Activated CD4-positive, alpha-beta T cell treated with anti-CD3 and anti-CD28 coated beads for 36 hours (primary cell): ENCODE measurements at regions of chr5 and their contacts with region 1.

Region 1: DNA sequence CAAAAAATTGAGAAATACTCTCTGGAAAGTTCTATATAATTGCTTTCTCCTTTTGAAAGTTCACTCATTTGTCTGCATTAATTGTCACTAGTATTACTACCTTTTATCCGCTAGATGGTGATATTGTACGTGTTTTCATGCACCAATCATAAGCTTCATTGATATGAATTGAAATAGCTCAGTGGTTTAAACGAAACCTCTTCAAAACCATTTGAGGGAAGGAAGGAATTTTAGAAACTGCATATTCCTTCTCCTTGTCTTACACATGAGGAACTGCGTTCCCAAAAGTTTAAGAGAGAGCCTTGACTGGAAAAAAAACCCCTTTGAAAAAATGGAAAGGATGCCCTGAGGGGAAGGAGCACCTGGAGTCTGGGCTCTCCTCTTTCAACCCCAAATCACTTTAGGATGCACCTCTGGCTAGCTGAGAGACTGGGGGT is 98.6 kb downstream of the YTHDC2 start:
- DNase-seq: no peak
- ATAC-seq: no peak
- H3K4me3 Mint-ChIP-seq: no peak overlapping the region
- H3K27ac Mint-ChIP-seq: no peak overlapping the region
- H3K4me1 Mint-ChIP-seq: peaks cover 3% of the 10 kb centered on the region
- H3K27me3 Mint-ChIP-seq: peaks cover 2% of the 10 kb centered on the region

Region 2: DNA sequence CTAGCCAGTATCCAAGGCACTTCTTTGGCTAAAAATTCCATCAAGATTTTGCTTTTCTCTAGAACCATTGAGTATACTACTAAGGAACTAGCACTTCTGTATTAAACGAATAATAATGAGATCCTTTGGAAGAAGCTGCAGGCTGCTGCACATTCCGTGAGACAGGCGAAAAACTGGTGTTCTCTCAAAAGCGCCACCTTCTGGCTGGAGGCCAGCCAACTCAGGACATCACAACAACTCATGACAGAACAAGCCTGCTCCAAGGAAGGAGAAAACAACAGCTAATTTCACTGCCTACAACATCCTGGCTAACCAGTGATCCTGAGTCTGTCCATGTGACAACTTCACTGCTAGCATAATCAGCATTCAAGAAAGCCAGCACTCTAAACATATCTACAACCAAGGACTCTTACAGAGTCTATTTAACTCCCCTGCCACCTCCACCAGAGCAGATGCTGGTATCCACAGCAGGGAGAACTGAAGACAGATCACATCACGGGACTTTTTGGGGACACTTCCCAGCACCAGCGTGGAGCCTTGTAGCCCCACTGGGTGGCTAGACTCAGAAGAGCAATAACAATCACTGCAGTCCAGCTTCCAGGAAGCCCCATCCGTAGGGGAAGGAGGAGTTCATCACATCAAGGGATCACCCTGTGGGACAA is 51.9 kb after region 1 on chr5:
- CTCF ChIA-PET with region 1: interaction called, 31 read pairs
- POLR2A ChIA-PET with region 1: no interaction called
- intact Hi-C with region 1: loop called (anchors 1 kb)
- DNase-seq: peak; percentile 60
- ATAC-seq: no peak
- H3K4me3 Mint-ChIP-seq: no peak overlapping the region
- H3K27ac Mint-ChIP-seq: no peak overlapping the region
- H3K4me1 Mint-ChIP-seq: no peaks in the 10 kb centered on the region
- H3K27me3 Mint-ChIP-seq: peaks cover 22% of the 10 kb centered on the region

Region 3: DNA sequence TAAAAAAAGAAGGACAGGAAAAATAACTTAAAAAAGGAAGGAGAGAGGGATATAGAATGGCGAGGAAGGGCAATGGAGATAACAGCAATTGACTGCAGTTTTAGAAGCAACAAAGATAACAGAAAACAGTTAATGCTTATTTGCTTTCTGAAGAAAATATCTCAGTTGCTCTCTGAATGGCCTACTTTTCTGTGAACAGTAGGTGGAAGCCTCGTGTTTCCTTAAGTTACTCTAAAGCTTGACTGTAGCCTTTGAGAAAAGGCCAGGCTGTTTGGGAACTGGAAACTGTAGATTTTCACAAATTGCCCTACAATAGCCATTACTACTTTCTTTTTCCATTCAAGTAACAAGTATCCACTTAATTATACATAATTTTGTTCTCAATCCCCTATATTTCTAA is 305.9 kb after region 1 on chr5:
- CTCF ChIA-PET with region 1: no interaction called
- POLR2A ChIA-PET with region 1: no interaction called
- intact Hi-C with region 1: no loop called
- DNase-seq: no peak
- ATAC-seq: no peak
- H3K4me3 Mint-ChIP-seq: no peak overlapping the region
- H3K27ac Mint-ChIP-seq: no peak overlapping the region
- H3K4me1 Mint-ChIP-seq: no peaks in the 10 kb centered on the region
- H3K27me3 Mint-ChIP-seq: no peaks in the 10 kb centered on the region

Region 4: GRCh38 chr5:114449860-114450421 is 837.9 kb after region 1 on chr5:
- CTCF ChIA-PET with region 1: interaction called, 25 read pairs
- POLR2A ChIA-PET with region 1: no interaction called
- intact Hi-C with region 1: loop called (anchors 1 to 2 kb)
- DNase-seq: peak; percentile 76
- ATAC-seq: peak; percentile 92
- H3K4me3 Mint-ChIP-seq: no peak overlapping the region
- H3K27ac Mint-ChIP-seq: no peak overlapping the region
- H3K4me1 Mint-ChIP-seq: peaks cover 2% of the 10 kb centered on the region
- H3K27me3 Mint-ChIP-seq: peaks cover 7% of the 10 kb centered on the region

Region 5: GRCh38 chr5:114789773-114790402 is 1177.8 kb after region 1 on chr5:
- CTCF ChIA-PET with region 1: no interaction called
- POLR2A ChIA-PET with region 1: no interaction called
- intact Hi-C with region 1: loop called in 1 of 2 experiments (anchors 5 kb)
- DNase-seq: no peak
- ATAC-seq: peak; percentile 23
- H3K4me3 Mint-ChIP-seq: no peak overlapping the region
- H3K27ac Mint-ChIP-seq: no peak overlapping the region
- H3K4me1 Mint-ChIP-seq: peaks cover 3% of the 10 kb centered on the region
- H3K27me3 Mint-ChIP-seq: peaks cover 2% of the 10 kb centered on the region

Region 6: DNA sequence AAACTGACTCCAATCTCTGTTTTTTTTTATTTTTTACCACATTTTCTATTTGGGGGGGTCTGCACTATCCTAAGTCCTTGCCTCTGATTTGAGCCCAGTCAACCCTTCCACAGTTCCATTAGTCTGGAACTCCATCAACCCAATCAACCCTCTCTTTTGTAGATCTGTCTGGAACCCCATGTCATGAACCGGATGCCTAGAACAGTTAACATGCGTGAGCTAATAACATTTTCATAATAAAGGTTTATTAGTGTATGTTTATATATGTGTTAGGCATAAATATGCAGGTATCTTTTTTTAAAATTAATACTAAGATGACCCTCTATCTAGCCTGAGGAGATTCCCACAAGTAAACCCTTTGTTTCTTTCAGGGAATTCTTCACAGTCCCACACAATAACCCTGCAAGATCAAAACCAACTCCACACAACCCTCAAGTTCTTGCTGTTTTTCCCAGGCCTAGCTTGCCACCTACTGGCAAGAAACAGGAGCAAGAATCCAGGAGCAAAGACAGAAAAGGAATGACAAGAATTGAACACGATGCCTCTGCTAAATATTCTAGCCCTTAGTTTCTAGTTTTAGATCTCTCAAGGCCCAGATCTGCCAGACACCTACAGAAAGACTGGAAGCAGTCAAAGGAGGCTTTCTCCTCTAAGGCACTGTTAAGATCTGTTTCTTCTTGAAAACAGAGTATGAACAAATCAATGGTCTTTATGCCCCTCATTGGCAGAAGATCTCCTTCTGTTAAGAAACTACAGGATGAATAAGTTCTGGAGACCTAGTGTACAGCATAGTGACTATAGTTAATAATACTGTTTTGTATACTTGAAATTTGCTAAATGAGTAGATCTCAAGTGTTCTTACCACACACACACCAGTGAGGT is 1457.2 kb after region 1 on chr5:
- CTCF ChIA-PET with region 1: interaction called, 7 read pairs
- POLR2A ChIA-PET with region 1: no interaction called
- intact Hi-C with region 1: loop called in 1 of 2 experiments (anchors 5 kb)
- DNase-seq: peak; percentile 35
- ATAC-seq: peak; percentile 20
- H3K4me3 Mint-ChIP-seq: no peak overlapping the region
- H3K27ac Mint-ChIP-seq: peak overlapping the region; percentile 55
- H3K4me1 Mint-ChIP-seq: peaks cover 18% of the 10 kb centered on the region
- H3K27me3 Mint-ChIP-seq: peaks cover 28% of the 10 kb centered on the region

Region 7: DNA sequence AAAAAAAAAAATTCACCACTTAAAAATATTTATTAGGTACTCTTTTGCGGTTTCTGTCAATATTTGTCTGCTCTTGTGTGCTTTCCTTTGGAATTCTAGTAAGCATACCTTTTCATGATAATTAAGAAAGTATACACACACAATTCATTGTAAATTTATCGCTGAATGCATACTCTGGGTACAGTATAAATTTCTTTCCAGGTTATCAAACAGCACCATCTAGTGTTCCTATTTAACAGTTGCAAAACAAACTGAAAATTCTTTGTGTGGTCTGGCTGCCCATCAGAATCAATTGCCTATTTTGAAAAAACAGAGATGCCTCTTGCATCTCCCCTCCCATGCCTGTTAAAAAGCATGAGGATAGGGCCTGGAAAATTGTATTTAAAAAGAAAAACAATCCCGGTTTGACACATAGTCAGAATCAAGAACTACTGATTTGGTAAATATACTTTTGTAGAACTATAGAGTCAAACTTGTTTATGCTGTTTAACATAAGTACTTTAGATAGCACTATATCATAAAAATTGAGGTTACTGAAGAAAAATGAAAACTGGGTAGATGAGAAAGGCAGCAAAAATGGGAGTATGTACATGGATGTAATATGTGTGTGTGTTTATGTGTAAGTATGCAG is 1634.4 kb after region 1 on chr5:
- CTCF ChIA-PET with region 1: interaction called, 3 read pairs
- POLR2A ChIA-PET with region 1: no interaction called
- intact Hi-C with region 1: loop called in 1 of 2 experiments (anchors 1 kb)
- DNase-seq: no peak
- ATAC-seq: no peak
- H3K4me3 Mint-ChIP-seq: no peak overlapping the region
- H3K27ac Mint-ChIP-seq: no peak overlapping the region
- H3K4me1 Mint-ChIP-seq: peaks cover 21% of the 10 kb centered on the region
- H3K27me3 Mint-ChIP-seq: no peaks in the 10 kb centered on the region